Activated T-helper 1 cell treated with anti-CD3 and anti-CD28 coated beads, Interleukin-12 subunit alpha, Interleukin-12 subunit beta, Interleukin-2, Interleukin-4 antibody, amounts not matched to agents 30 ng/mL and 10 ng/mL and 1 ng/mL, durations not matched to agents 14 hours and 24 hours and 36 hours (primary cell): ENCODE measurements at regions of chr7 and their contacts with region 1.

Region 1: GRCh38 chr7:103074519-103075336 is at the starts of genes ARMC10 and FBXL13:
- DNase-seq: peak; percentile 84
- H3K4me3 Mint-ChIP-seq: peak within 1 kb of the TSS; percentile 98
- H3K27ac Mint-ChIP-seq: peak within 1 kb of the TSS; percentile 94
- H3K4me1 Mint-ChIP-seq: peaks cover 27% of the 10 kb centered on the region
- H3K27me3 Mint-ChIP-seq: no peaks in the 10 kb centered on the region
- total RNA-seq, gene ARMC10: 49.6 and 51.8 TPM in 2 replicates
- total RNA-seq, gene FBXL13: 0.34 and 0.54 TPM in 2 replicates

Region 2: DNA sequence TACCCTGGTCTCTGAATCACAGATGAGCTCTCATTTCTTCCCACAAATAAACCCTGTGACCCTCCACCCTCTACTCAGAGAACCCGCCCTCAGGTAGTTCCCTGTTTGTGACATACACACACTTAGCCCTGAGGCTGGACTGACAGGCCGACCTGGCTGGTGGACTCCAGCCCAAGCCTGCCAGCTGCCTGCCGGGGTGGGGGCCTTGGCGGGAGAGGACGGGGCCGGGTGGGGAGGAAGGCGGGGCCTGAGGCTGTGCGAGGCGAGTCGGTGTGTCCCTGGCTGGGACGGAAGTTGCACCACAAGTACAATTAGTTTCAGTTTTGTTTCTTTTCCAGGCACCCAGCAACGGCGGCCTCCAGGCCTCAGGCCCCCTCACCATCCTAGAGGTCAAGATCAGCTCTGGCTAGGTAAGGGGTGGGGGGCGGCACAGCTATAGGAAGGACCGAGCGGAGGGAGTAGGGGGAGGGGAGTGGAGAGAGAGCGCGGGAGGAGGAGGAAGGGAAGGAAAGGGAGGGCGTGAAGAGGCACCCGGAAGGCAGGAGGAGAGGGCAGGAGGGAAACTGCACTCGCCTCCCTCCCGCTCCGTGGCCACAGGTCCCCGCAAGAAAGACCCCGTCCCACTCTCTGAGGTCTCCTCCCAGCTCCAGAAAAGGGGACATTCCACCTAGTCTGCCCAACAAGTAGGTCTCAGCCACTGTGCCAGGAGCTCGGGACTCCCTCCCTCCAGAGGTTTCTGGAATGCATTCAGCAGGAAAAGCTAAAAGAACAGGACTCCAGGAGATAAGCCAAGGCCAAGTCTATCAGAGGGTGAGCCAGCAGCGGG is 1989.4 kb before region 1 on chr7 and contains the start of gene TRIM56:
- intact Hi-C with region 1: loop called (anchors 5 kb)
- DNase-seq: peak; percentile 76
- H3K4me3 Mint-ChIP-seq: peak within 1 kb of the TSS; percentile 98
- H3K27ac Mint-ChIP-seq: peak within 1 kb of the TSS; percentile 98
- H3K4me1 Mint-ChIP-seq: peaks cover 31% of the 10 kb centered on the region
- H3K27me3 Mint-ChIP-seq: no peaks in the 10 kb centered on the region
- total RNA-seq, gene TRIM56: 41.2 and 45.7 TPM in 2 replicates

Region 3: GRCh38 chr7:102834999-102835398 is 239.7 kb before region 1 on chr7:
- intact Hi-C with region 1: loop called (anchors 1 kb)
- DNase-seq: peak; percentile 5
- H3K4me3 Mint-ChIP-seq: no peak overlapping the region
- H3K27ac Mint-ChIP-seq: peak overlapping the region; percentile 41
- H3K4me1 Mint-ChIP-seq: peaks cover 11% of the 10 kb centered on the region
- H3K27me3 Mint-ChIP-seq: peaks cover 10% of the 10 kb centered on the region

Region 4: DNA sequence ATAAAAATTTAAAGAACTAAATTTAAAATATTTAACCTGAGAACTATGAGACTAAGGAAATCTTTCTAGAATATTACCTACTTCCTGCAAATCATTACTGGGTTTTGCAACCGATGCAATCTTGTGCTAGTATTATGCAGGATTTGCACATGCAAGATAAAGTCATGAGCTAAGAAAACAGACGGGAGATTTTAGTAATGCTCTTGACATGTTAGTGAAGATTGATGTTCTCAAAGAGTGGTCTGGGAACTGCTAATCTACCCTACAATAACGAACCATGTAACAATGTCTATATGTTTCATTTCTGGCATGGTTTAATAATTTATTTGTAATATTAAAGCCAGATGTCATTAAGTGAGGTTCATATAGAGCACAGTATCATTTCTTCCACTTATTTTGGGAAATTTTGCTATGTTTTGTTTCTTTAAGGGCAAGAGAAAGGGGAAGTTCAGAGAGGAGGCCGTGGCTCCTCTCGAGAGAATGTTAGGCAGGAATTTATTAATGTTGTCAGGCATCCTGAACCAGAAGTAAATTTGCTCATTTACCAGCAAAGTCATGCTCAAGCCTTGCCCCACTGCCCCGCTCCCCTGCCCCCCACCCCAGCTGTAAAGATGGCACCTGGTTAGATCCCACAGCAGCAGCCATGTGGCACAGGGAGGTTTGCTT is 139.1 kb before region 1 on chr7:
- intact Hi-C with region 1: no loop called
- DNase-seq: no peak
- H3K4me3 Mint-ChIP-seq: no peak overlapping the region
- H3K27ac Mint-ChIP-seq: no peak overlapping the region
- H3K4me1 Mint-ChIP-seq: no peaks in the 10 kb centered on the region
- H3K27me3 Mint-ChIP-seq: peaks cover 7% of the 10 kb centered on the region

Region 5: DNA sequence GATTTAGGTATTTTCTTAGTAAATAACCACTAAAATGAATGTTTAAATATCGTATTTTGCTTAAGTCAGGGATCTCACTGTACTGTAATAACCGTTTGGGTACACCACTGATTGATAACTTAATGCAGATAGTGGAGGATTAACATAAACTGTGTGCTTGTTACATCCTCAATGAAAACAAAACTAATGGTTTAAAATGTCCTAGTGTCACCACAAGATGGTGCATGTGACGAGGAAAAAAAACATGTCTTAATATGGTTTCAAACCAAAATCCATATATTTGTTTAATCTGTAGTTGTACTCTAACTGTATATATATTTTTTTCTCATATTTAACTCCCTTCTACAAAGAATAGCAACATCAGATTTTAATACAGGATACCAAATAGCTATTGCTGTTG is 19.4 kb after region 1 on chr7:
- intact Hi-C with region 1: loop called (anchors 2 kb)
- DNase-seq: no peak
- H3K4me3 Mint-ChIP-seq: no peak overlapping the region
- H3K27ac Mint-ChIP-seq: no peak overlapping the region
- H3K4me1 Mint-ChIP-seq: peaks cover 4% of the 10 kb centered on the region
- H3K27me3 Mint-ChIP-seq: no peaks in the 10 kb centered on the region

Region 6: GRCh38 chr7:103148994-103149807 is 74.5 kb after region 1 on chr7 and contains the start of gene NAPEPLD:
- intact Hi-C with region 1: loop called (anchors 1 kb)
- DNase-seq: peak; percentile 65
- H3K4me3 Mint-ChIP-seq: peak within 1 kb of the TSS; percentile 96
- H3K27ac Mint-ChIP-seq: peak within 1 kb of the TSS; percentile 97
- H3K4me1 Mint-ChIP-seq: peaks cover 54% of the 10 kb centered on the region
- H3K27me3 Mint-ChIP-seq: no peaks in the 10 kb centered on the region
- total RNA-seq, gene NAPEPLD: 7.8 and 8.1 TPM in 2 replicates

Region 7: DNA sequence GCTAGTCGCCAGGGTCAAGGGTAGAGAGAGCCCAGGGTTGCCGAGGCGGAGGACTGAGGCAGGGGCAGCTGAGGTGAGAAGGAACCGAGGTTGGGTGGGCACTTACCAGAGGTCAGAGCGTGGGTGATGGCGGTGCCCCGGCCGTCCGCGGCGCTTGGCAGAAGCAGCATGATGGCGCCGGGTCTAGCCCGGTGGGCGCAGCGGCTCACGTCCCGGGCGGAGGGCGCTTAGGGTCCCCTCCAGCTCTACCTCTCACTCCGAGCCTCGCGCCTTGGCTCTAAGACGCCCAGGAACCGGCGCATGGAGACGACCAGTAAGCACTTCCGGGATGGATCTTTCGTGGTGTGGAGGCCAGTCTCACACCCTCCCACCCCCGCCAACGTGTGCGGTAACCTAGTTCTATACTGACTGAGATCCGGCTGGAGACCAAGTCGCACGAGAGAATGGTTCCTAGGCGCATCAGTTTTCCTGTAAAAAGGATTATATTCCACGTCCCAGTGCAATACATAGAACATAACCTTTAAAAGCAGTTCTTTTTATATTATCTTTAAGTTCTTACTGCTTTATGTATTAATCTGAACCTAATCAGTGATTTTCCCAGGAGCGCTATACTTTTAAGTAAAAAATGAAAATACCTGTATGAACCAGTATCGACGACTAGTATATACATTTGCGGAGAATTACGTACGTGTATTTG is 269.9 kb after region 1 on chr7 and contains the start of gene DNAJC2:
- intact Hi-C with region 1: loop called (anchors 1 kb)
- DNase-seq: peak; percentile 80
- H3K4me3 Mint-ChIP-seq: peak within 1 kb of the TSS; percentile 100
- H3K27ac Mint-ChIP-seq: peak within 1 kb of the TSS; percentile 99
- H3K4me1 Mint-ChIP-seq: peaks cover 58% of the 10 kb centered on the region
- H3K27me3 Mint-ChIP-seq: no peaks in the 10 kb centered on the region
- total RNA-seq, gene DNAJC2: 63.8 and 68.6 TPM in 2 replicates

Region 8: GRCh38 chr7:104207731-104208420 is 1133.1 kb after region 1 on chr7 and contains the start of gene ORC5:
- intact Hi-C with region 1: loop called (anchors 5 kb)
- DNase-seq: peak; percentile 79
- H3K4me3 Mint-ChIP-seq: peak within 1 kb of the TSS; percentile 94
- H3K27ac Mint-ChIP-seq: peak within 1 kb of the TSS; percentile 92
- H3K4me1 Mint-ChIP-seq: peaks cover 43% of the 10 kb centered on the region
- H3K27me3 Mint-ChIP-seq: peaks cover 8% of the 10 kb centered on the region
- total RNA-seq, gene ORC5: 32.5 and 35.8 TPM in 2 replicates